ENCODE measurements at regions of chr11 and their contacts with region 1.

Region 1: GRCh38 chr11:44893846-44894617 is 56.7 kb downstream of the TP53I11 start:
- DNase-seq: peak; percentile 66 to 78
- ATAC-seq: peak; percentile 88 to 98
- H3K4me3 ChIP-seq: no peak overlapping the region
- H3K27ac ChIP-seq: no peak overlapping the region
- H3K4me1 ChIP-seq: no peaks in the 10 kb centered on the region
- CTCF ChIP-seq: peak; percentile 87
- EP300 ChIP-seq: no peak
- POLR2A ChIP-seq: no peak
- RAD21 ChIP-seq: peak; percentile 92 to 94

Region 2: DNA sequence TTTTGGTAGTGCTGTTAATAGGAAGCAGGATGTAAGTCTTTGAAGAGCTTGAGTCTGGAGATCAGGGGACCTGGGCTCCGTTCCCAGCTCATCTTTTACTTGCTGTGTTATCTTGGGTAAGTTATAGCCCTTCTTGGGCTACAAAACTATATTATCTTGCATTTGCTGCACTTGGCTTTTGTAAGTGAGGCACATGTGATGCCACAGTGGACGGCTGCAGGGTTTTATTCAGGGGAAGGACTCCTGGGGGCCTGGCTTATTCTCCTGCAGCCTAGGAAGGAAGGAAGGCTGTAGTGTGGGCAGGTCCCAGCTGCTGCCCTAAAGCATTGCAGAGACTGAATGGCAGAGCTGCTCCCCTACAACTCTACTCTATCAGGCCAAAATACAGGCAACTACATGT is 322.2 kb before region 1 on chr11:
- CTCF ChIA-PET with region 1: no interaction called
- POLR2A ChIA-PET with region 1: no interaction called
- DNase-seq: no peak
- ATAC-seq: no peak
- H3K4me3 ChIP-seq: no peak overlapping the region
- H3K27ac ChIP-seq: no peak overlapping the region
- H3K4me1 ChIP-seq: peaks cover 6% of the 10 kb centered on the region; the same call in 2 of the 3 replicates
- CTCF ChIP-seq: no peak
- EP300 ChIP-seq: no peak
- POLR2A ChIP-seq: no peak
- RAD21 ChIP-seq: no peak

Region 3: GRCh38 chr11:44718612-44719390 is 175.2 kb before region 1 on chr11:
- CTCF ChIA-PET with region 1: interaction called, 24 read pairs
- POLR2A ChIA-PET with region 1: no interaction called
- DNase-seq: no peak
- ATAC-seq: no peak
- H3K4me3 ChIP-seq: no peak overlapping the region
- H3K27ac ChIP-seq: no peak overlapping the region
- H3K4me1 ChIP-seq: no peaks in the 10 kb centered on the region
- CTCF ChIP-seq: no peak
- EP300 ChIP-seq: no peak
- POLR2A ChIP-seq: no peak
- RAD21 ChIP-seq: no peak

Region 4: GRCh38 chr11:44760917-44761550 is 133.0 kb before region 1 on chr11:
- CTCF ChIA-PET with region 1: interaction called, 11 read pairs
- POLR2A ChIA-PET with region 1: no interaction called
- DNase-seq: peak; percentile 70 to 71
- ATAC-seq: peak; percentile 95 to 97
- H3K4me3 ChIP-seq: no peak overlapping the region
- H3K27ac ChIP-seq: peak overlapping the region in 1 of 2 experiments; percentile 64; a peak in 3 of 6 replicates
- H3K4me1 ChIP-seq: peaks cover 24% of the 10 kb centered on the region
- CTCF ChIP-seq: no peak
- EP300 ChIP-seq: no peak
- POLR2A ChIP-seq: no peak
- RAD21 ChIP-seq: no peak

Region 5: DNA sequence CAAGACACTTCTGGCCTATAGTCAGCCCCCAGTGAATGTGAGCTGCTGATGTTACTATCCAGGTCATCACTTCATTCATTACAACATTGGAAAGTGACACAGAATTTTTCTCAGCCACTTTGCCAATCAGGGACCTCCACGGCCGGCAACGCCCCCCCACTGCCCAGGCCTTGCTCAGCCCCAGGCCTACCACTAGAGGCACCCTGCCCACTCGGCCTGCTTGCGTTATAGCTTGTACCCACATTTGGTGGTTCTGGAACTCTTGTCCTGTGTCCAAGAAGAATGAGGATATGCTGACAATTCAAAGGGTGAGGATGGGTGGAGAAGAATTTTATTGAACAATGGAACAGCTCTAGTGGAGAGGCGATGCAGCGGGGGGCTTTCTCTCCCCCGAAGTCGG is 71.0 kb before region 1 on chr11:
- CTCF ChIA-PET with region 1: interaction called, 12 read pairs
- POLR2A ChIA-PET with region 1: no interaction called
- DNase-seq: peak in 1 of 2 experiments; percentile 28
- ATAC-seq: peak; percentile 41 to 85; a peak in 3 of 6 replicates
- H3K4me3 ChIP-seq: no peak overlapping the region
- H3K27ac ChIP-seq: no peak overlapping the region
- H3K4me1 ChIP-seq: no peaks in the 10 kb centered on the region
- CTCF ChIP-seq: no peak
- EP300 ChIP-seq: no peak
- POLR2A ChIP-seq: no peak
- RAD21 ChIP-seq: peak in 1 of 2 experiments; percentile 24; a peak in 1 of 5 replicates

Region 6: DNA sequence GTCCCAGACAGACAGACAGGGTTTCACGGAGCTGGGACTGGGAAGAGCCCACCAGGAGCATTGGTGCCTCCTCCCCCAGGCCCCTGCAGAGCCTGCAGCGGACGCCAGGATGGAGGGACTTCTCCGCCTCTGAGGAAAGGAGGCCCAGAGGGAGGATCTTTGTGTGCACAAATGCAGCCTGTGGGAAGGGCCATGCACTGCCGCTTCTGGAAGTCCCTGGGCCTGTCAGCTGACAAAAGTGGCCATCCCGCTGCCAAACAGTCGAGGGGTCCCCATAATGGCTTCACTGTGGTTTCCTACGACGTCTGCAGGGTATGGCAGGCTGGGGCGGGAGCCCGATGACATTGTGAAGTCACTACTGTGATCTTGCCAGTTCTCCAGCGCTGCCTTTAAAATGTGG is 17.1 kb before region 1 on chr11:
- CTCF ChIA-PET with region 1: interaction called, 18 read pairs
- POLR2A ChIA-PET with region 1: no interaction called
- DNase-seq: no peak
- ATAC-seq: no peak
- H3K4me3 ChIP-seq: no peak overlapping the region
- H3K27ac ChIP-seq: no peak overlapping the region; a peak in 1 of 6 replicates
- H3K4me1 ChIP-seq: no peaks in the 10 kb centered on the region
- CTCF ChIP-seq: no peak
- EP300 ChIP-seq: no peak
- POLR2A ChIP-seq: no peak
- RAD21 ChIP-seq: no peak

Region 7: GRCh38 chr11:44911029-44911814 is 17.2 kb after region 1 on chr11:
- CTCF ChIA-PET with region 1: interaction called, 71 read pairs
- POLR2A ChIA-PET with region 1: no interaction called
- DNase-seq: peak; percentile 82 to 88
- ATAC-seq: peak; percentile 75 to 97
- H3K4me3 ChIP-seq: no peak overlapping the region
- H3K27ac ChIP-seq: no peak overlapping the region
- H3K4me1 ChIP-seq: no peaks in the 10 kb centered on the region
- CTCF ChIP-seq: peak; percentile 87
- EP300 ChIP-seq: no peak
- POLR2A ChIP-seq: no peak
- RAD21 ChIP-seq: peak; percentile 83 to 88

Region 8: DNA sequence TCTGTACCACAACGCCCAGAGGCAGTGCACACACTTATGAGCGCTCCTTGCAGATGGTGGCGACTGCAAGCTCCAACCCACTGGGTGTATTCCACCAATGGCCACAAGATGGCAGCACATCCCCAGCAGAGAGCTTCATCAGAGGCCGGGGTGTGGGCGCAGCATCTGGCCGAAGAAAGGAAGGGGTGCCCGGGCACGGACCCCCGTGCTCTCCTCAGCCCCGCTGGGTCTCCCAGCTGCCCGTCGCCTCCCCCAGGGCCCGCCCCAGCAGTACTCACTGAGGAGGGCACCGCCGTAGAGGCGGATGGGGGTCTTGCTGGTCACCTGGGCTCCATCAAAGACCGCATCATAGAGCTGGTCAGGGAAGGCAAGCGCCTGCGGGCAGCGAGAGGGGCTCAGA is 42.5 kb after region 1 on chr11:
- CTCF ChIA-PET with region 1: no interaction called
- POLR2A ChIA-PET with region 1: no interaction called
- DNase-seq: peak; percentile 68 to 80
- ATAC-seq: peak; percentile 88 to 93
- H3K4me3 ChIP-seq: no peak overlapping the region
- H3K27ac ChIP-seq: no peak overlapping the region
- H3K4me1 ChIP-seq: 0 out of 3 replicates have a peak, but pooled peaks cover 3% of the 10 kb centered on the region
- CTCF ChIP-seq: peak; percentile 88
- EP300 ChIP-seq: no peak
- POLR2A ChIP-seq: no peak
- RAD21 ChIP-seq: peak; percentile 97

Region 9: DNA sequence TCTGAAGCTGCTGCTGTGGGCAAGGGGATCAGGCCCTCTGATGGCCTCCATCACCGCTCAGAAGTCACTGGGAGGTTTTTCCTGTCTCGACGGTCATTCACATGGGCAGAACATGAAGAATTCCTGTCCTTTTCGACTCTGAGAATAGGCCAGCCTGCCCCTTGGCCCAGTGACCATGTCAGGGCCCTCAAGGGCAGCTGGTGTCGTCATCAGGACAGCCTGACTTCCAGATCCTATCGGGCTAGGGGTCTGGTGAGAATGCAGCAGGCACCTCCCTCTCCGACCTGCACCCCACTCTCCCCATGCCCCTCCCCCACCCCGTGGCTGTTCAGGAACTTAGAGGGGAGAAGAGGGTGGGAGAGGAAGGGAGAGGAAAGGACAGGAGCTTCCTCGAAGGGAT is 53.1 kb after region 1 on chr11:
- CTCF ChIA-PET with region 1: no interaction called
- POLR2A ChIA-PET with region 1: no interaction called
- DNase-seq: no peak
- ATAC-seq: no peak
- H3K4me3 ChIP-seq: no peak overlapping the region
- H3K27ac ChIP-seq: no peak overlapping the region
- H3K4me1 ChIP-seq: peaks cover 10% of the 10 kb centered on the region; the same call in 2 of the 3 replicates
- CTCF ChIP-seq: no peak
- EP300 ChIP-seq: no peak
- POLR2A ChIP-seq: no peak
- RAD21 ChIP-seq: no peak